ENCODE measurements at regions of chr15 and their contacts with region 1.

Region 1: GRCh38 chr15:33086507-33087121 is 107.9 kb downstream of the FMN1 start:
- DNase-seq: no peak
- ATAC-seq: peak; percentile 77
- H3K4me3 ChIP-seq: no peak overlapping the region
- H3K27ac ChIP-seq: no peak overlapping the region
- H3K4me1 ChIP-seq: no peaks in the 10 kb centered on the region
- H3K27me3 ChIP-seq: no peaks in the 10 kb centered on the region

Region 2: DNA sequence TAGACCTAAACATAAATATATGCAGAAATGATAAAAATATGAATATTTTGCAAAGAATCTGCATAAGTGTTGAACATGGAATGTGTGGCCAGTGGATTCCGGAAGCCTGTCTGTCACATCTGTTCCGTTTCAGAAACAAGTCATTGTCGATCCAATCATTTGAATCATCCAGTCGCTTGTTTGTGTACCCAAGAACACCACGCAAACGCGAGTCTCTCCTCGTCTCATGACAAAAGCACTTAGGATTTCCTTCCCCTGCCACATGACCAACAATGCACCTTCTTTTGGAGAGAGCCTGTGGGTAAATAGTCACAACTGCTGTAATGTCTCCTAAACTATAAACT is 27.7 kb after region 1 on chr15:
- intact Hi-C with region 1: no loop called
- DNase-seq: no peak
- ATAC-seq: no peak
- H3K4me3 ChIP-seq: no peak overlapping the region
- H3K27ac ChIP-seq: no peak overlapping the region
- H3K4me1 ChIP-seq: no peaks in the 10 kb centered on the region
- H3K27me3 ChIP-seq: no peaks in the 10 kb centered on the region

Region 3: DNA sequence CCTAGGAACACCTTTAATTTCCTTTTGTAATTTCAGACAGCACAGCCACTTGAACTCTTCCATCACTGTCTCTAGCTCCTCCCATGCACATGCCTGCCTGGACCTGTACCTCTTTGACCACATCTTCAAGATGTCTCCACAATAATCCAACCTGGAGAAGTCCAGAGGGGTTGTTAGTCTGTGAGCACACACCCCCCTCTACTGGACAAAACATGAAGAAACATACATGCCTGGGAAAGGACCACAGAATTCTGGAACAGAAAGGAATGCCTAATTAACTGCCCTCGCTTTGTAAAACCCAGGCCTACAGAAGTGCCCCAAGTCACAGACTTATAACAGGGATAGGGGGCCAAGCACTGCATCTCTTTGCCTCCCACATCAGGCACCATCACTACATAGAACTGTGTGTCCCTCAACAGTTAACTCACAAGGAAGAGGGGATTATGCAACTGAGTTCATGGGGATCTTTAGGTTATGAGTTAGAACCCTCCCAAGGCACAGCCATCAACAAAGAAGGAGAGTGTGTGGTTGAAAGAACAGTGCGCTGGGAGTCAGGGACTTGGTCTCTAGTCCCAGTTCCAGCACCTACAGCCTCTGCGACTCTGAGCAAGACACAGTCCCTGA is 46.2 kb after region 1 on chr15:
- intact Hi-C with region 1: loop called (anchors 2 to 5 kb)
- DNase-seq: no peak
- ATAC-seq: peak; percentile 58
- H3K4me3 ChIP-seq: no peak overlapping the region
- H3K27ac ChIP-seq: no peak overlapping the region
- H3K4me1 ChIP-seq: no peaks in the 10 kb centered on the region
- H3K27me3 ChIP-seq: no peaks in the 10 kb centered on the region

Region 4: DNA sequence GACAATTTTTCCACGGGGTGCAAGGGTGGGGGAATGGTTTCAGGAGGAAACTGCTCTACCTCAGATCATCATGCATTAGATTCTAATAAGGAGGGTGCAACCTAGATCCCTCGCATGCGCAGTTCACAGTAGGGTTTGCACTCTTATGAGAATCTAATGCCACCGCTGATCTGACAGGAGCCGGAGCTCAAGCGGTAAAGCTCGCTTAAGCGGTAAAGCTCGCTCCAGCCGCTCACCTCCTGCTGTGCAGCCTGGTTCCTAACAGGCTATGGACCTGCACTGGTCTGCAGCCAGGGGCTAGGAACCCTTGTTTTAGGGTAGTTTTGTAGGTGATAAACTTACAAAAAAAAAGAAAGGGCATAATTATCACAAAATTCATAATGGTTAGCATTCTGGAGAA is 170.3 kb after region 1 on chr15:
- intact Hi-C with region 1: loop called in 1 of 2 experiments (anchors 10 kb)
- DNase-seq: no peak
- ATAC-seq: no peak
- H3K4me3 ChIP-seq: no peak overlapping the region
- H3K27ac ChIP-seq: no peak overlapping the region
- H3K4me1 ChIP-seq: no peaks in the 10 kb centered on the region
- H3K27me3 ChIP-seq: no peaks in the 10 kb centered on the region

Measured in aorta (tissue), 5 donors.